ENCODE measurements at regions of chr10 and their contacts with region 1.

Region 1: DNA sequence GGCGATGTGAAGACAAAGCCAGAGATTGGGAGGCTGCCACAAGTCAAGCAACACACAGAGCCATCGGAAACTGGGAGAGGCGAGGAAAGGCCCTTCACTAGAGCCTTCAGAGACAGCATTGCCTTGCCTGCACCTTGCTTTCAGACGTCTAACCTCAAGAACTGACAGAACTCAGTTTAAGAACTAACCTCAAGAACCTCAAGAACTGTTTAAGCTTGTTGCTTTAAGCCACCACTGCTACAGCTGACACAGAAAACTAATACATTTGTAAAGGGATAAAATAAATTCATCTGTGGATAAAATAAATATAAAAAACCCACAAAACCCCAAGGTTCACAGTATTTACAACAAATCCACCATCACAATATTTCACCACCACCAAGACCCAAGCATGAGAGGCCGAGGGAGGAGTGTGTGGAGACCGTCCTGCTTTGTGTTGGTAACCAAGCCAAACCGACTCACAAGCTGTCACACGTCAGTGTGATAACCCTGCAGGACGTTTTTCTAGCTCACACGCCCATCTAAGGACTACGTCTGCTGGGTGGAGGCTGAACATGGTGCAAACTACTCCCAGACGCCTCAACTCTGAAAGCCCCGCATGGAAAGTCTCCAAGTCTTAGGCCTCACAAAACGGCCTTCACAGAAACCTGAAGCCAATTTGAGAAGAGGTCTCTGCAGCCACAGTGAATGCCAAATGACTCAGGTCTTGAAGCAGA is 116.8 kb downstream of the ABLIM1 start:
- DNase-seq: peak; percentile 94
- H3K4me3 Mint-ChIP-seq: peak overlapping the region; percentile 32
- H3K27ac Mint-ChIP-seq: peak overlapping the region; percentile 90
- H3K4me1 Mint-ChIP-seq: peaks cover 78% of the 10 kb centered on the region
- H3K27me3 Mint-ChIP-seq: no peaks in the 10 kb centered on the region

Region 2: GRCh38 chr10:113958631-113959382 is 582.4 kb before region 1 on chr10:
- intact Hi-C with region 1: loop called (anchors 5 kb)
- DNase-seq: no peak
- H3K4me3 Mint-ChIP-seq: no peak overlapping the region
- H3K27ac Mint-ChIP-seq: no peak overlapping the region
- H3K4me1 Mint-ChIP-seq: peaks cover 40% of the 10 kb centered on the region
- H3K27me3 Mint-ChIP-seq: peaks cover 20% of the 10 kb centered on the region

Region 3: DNA sequence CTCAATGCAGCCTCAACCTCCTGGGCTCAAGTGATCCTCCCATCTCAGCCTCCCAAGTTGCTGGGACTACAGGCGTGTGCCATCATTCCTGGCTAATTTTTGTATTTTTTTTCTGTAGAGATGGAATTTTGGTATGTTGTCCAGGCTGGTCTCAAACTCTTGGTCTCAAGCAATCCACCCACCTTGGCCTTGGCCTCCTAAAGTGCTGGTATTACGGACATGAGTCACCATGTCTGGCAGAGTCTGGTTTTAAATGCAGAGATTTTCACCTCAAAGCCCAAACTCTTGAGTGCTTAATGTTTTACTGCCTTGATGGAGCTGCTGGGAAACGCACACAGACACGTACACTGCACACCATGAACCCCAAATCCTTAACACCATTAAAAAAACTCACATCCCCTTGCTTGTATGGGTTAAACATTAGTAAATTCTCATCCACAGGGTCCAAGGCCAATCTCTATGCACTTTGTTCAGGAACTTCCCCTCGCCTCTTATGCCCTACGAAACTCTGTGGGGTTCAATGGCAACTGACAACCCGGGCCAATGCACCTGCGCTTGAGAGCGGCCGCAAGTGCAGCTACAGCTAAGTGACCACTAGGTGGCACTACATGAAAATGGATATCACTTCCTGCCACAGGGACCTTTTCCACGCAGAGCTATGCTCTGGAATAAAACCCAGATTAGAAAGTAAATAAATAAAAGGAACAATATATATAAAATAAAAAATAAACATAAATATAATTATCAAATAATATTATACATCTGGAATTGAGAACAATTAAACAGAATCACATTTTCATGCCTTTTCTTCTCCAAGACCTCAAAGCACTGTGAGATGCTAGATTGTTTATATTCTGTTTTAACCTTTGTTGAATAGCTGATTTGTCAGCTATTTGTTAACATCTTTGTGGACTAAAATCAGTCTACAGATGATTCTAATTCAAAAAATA is 70.0 kb before region 1 on chr10:
- intact Hi-C with region 1: loop called (anchors 2 kb)
- DNase-seq: peak; percentile 90
- H3K4me3 Mint-ChIP-seq: no peak overlapping the region
- H3K27ac Mint-ChIP-seq: no peak overlapping the region
- H3K4me1 Mint-ChIP-seq: peaks cover 20% of the 10 kb centered on the region
- H3K27me3 Mint-ChIP-seq: no peaks in the 10 kb centered on the region

Region 4: DNA sequence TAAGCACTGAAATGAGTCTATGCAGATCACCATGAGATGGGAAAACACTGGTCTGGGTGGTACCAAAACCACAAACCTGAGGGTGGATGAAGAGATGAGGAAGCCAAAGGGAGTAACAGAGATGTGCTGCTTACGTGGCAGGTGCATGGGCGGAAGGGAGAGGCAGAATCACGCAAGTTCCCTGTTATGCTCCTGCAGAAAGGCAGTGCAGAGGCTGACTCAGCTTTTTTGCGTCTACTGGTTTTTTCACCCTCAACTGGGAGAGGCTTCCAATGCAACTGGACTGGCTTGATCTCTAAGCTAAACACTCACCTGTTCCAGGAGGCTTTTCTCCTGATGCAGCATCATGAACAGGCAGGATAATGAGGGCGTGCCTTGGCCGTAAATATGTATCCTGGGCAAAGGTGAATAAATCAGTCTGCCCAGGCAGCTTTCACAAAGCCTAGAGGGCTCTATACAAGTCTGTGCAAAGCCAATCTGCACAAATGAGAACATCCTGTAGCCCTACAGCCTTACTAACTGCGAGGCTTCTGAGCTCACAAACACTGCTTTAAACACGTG is 41.5 kb before region 1 on chr10:
- intact Hi-C with region 1: loop called (anchors 1 kb)
- DNase-seq: peak; percentile 87
- H3K4me3 Mint-ChIP-seq: peak overlapping the region; percentile 64
- H3K27ac Mint-ChIP-seq: peak overlapping the region; percentile 89
- H3K4me1 Mint-ChIP-seq: peaks cover 63% of the 10 kb centered on the region
- H3K27me3 Mint-ChIP-seq: no peaks in the 10 kb centered on the region

Region 5: DNA sequence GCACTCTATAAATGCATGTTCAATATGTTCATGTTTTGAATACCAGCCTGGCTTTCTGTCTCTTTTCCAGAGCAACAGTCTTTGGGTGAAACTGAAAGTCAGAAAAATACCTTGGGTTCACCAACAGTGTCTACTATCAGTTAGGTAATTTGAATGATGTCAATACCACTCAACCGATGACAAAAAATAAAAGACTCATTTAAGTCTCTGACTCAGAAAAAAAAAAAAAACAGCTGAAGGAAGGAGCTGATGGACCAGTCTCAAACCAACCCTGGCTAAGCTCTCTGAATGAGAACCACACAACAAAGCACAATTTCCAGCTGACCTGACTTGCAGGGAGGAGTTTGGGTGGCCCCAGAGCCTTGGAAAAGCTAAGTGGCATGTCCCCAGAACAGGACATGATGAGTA is 74.4 kb after region 1 on chr10:
- intact Hi-C with region 1: loop called (anchors 5 kb)
- DNase-seq: peak; percentile 68
- H3K4me3 Mint-ChIP-seq: peak overlapping the region; percentile 17
- H3K27ac Mint-ChIP-seq: peak overlapping the region; percentile 50
- H3K4me1 Mint-ChIP-seq: peaks cover 16% of the 10 kb centered on the region
- H3K27me3 Mint-ChIP-seq: peaks cover 4% of the 10 kb centered on the region

Region 6: DNA sequence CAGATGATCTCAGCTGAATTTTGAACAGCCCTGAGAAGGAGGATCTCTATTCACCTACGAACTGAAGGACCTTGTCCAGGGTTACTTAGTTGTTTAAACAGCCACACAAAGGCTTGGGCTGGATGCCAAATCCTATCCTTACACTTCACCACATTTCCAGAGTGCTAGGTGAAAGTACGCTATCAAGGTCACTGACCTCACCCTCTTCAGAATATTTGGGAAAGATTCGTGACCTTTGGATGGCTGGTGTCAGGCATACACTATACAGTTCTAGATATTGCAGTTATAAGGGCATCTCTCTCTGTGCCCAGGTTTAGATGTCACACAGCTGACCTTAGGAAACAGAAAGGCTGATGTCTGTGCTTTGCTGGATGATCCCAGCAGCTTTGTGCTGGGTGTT is 178.1 kb after region 1 on chr10:
- intact Hi-C with region 1: no loop called
- DNase-seq: no peak
- H3K4me3 Mint-ChIP-seq: no peak overlapping the region
- H3K27ac Mint-ChIP-seq: no peak overlapping the region
- H3K4me1 Mint-ChIP-seq: no peaks in the 10 kb centered on the region
- H3K27me3 Mint-ChIP-seq: peaks cover 40% of the 10 kb centered on the region

Region 7: GRCh38 chr10:114937962-114938855 is 397.0 kb after region 1 on chr10 and contains the start of gene TRUB1:
- intact Hi-C with region 1: loop called (anchors 2 kb)
- DNase-seq: peak; percentile 96
- H3K4me3 Mint-ChIP-seq: peak within 1 kb of the TSS; percentile 94
- H3K27ac Mint-ChIP-seq: peak within 1 kb of the TSS; percentile 94
- H3K4me1 Mint-ChIP-seq: peaks cover 31% of the 10 kb centered on the region
- H3K27me3 Mint-ChIP-seq: no peaks in the 10 kb centered on the region
- total RNA-seq, gene TRUB1: 18.5 and 20.9 TPM in 2 replicates